Activated CD8-positive, alpha-beta memory T cell treated with anti-CD3 and anti-CD28 coated beads, Interleukin-2, amount 10 ng/mL, durations not matched to agents 7 days and 5 days (primary cell): ENCODE measurements at regions of chr14 and their contacts with region 1.

Region 1: DNA sequence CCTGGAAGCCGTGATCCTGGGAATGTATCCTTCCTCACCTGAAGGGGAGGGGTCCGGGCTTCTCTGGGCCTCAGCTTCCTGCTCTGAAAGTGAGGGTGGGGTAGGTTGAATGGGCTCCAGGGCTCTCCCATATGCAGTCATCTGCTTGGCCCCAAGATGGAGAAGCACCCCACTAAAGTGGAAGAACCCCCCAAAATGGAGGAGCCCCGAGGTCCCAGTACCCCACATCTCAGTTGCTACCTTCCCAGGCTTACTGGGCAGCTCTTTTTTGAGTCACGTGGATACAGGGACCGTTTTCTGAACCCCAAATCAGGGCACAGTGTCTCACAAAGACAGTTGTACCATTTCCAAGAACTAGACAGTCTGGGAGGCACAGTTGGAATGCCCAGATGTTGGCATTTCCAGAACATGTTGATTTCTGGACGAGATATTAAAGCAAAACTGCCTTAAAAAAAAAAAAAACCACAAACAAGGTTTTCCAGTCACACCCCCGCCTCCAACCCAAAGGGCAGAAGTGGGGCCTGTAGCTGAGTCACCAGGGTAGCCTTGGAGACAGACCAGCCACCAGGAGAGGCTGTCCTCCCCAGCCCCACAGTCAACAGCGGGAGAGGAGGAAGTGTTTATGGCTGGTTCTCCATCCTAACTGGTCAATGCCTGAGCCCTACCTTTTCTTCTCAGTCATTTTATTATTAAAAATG is 12.1 kb downstream of the VASH1 start:
- DNase-seq: peak; percentile 41
- ATAC-seq: no peak
- H3K4me3 Mint-ChIP-seq: no peak overlapping the region
- H3K27ac Mint-ChIP-seq: no peak overlapping the region
- H3K4me1 Mint-ChIP-seq: peaks cover 20% of the 10 kb centered on the region
- H3K27me3 Mint-ChIP-seq: no peaks in the 10 kb centered on the region

Region 2: GRCh38 chr14:76784266-76785264 is 11.2 kb after region 1 on chr14:
- CTCF ChIA-PET with region 1: interaction called, 14 read pairs
- DNase-seq: peak; percentile 73
- ATAC-seq: peak; percentile 84
- H3K4me3 Mint-ChIP-seq: no peak overlapping the region
- H3K27ac Mint-ChIP-seq: no peak overlapping the region
- H3K4me1 Mint-ChIP-seq: peaks cover 42% of the 10 kb centered on the region
- H3K27me3 Mint-ChIP-seq: no peaks in the 10 kb centered on the region

Region 3: DNA sequence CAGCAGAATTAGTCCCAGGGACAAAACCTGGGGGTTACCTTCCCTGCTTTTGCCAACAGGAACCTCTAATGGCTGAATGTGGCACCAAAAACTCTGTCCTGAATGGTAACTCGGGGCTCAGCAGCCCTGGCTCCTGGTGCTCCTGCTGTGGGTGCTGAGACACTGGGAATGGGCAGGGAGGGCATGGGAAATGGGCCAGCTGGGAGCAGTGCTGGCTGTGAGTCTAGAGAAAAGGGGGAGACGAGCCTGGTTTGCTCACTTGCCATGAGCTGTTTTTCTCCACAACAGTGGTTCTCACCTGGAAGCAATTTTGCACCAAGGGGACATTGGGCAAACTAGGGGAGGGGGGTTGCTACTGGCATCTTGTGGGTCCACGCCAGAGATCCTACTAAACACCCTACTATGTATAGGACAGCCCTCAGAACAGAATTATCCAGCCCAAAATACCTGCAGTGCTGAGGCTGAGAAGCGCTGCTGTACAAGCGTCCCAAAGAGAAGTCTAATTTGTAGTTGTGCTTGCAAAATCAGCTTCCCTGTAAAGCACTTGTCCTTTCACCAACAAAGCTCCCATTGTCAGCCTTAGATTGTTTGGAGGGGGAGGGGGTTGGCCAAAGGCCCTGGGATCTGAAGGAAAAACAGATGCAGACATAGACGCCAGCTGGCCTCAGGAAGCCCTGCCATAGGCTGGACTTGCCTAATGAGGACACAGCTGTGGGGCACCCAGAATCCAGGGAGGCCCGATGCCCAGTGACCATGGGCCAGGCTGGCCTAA is 56.5 kb after region 1 on chr14:
- CTCF ChIA-PET with region 1: no interaction called
- DNase-seq: no peak
- ATAC-seq: no peak
- H3K4me3 Mint-ChIP-seq: no peak overlapping the region
- H3K27ac Mint-ChIP-seq: no peak overlapping the region
- H3K4me1 Mint-ChIP-seq: no peaks in the 10 kb centered on the region
- H3K27me3 Mint-ChIP-seq: peaks cover 10% of the 10 kb centered on the region

Region 4: DNA sequence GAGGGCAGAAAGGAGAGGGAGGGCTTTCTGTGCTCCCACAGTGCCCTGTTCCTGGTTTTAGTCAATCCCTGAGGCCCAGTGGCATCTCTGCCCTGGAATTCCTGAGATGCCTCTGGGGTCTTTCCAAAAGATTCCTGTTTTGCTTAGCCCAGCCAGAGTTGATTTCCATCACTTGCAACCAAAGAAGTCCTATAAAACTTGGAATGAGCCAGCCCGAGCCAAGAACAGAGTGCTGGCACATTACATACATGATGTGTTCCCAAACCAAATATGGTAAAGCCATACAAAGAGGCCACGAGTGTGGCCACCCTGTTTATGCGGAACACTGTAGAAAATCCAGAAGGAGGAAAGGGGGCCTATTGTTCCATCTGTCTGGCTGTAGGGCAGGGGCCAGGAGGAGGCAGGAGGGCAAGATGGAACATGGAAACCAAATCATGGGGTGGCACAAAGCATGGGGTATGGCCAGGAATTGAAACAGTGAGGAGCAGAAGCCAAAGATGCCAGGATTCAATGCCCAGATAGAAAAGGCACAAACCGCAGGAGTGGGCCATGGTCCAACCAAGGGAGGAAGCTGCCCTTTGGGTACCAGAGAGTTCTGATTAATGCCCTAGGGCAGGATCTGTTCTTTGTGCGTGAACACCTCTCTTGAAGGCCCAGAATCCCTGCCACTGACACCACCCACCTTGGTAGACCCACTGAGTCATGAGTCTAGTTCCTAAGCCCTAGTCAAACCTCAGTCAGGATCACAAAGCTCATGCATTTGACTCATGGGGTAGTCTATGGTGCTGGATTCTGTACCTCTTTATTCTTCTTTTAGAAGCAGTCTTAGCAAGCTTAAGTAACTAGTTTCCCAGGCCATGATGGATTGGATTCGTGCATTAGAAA is 128.1 kb after region 1 on chr14:
- CTCF ChIA-PET with region 1: no interaction called
- DNase-seq: no peak
- ATAC-seq: no peak
- H3K4me3 Mint-ChIP-seq: no peak overlapping the region
- H3K27ac Mint-ChIP-seq: no peak overlapping the region
- H3K4me1 Mint-ChIP-seq: peaks cover 10% of the 10 kb centered on the region
- H3K27me3 Mint-ChIP-seq: peaks cover 7% of the 10 kb centered on the region